Activated T-helper 1 cell treated with anti-CD3 and anti-CD28 coated beads, Interleukin-12 subunit alpha, Interleukin-12 subunit beta, Interleukin-2, Interleukin-4 antibody, amounts not matched to agents 30 ng/mL and 10 ng/mL and 1 ng/mL, durations not matched to agents 14 hours and 24 hours and 36 hours (primary cell): ENCODE measurements at regions of chr16 and their contacts with region 1.

Region 1: GRCh38 chr16:29729116-29729521 is 16.7 kb downstream of the C16orf54 start:
- DNase-seq: no peak
- H3K4me3 Mint-ChIP-seq: no peak overlapping the region
- H3K27ac Mint-ChIP-seq: no peak overlapping the region
- H3K4me1 Mint-ChIP-seq: peaks cover 20% of the 10 kb centered on the region
- H3K27me3 Mint-ChIP-seq: peaks cover 9% of the 10 kb centered on the region

Region 2: DNA sequence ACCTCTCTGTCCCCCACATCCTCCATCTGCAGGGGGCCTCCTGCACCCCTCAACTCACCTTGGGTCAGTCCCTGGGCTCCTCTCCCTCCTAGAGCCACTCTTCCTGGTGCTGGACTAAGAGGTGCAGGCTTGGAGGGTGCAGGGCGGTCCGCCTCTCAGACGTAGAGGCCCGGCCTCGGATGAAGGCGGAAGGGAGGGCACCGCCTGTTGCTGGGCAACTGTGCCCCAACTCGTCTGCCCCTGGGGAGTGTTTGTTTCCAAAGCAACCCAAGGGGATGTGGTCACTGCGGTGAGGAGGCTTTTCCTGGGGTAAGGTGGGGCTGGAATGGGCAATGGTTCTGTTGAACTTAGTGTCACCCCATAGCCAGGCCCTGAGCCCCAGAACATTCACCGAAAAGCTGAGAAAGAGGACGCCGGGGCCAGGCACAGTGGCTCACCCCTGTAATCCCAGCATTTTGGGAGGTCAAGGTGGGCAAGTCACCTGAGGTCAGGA is 16.8 kb after region 1 on chr16 and contains the start of gene C16orf54:
- intact Hi-C with region 1: loop called (anchors 1 kb)
- DNase-seq: peak; percentile 89
- H3K4me3 Mint-ChIP-seq: peak within 1 kb of the TSS; percentile 97
- H3K27ac Mint-ChIP-seq: peak within 1 kb of the TSS; percentile 97
- H3K4me1 Mint-ChIP-seq: peaks cover 49% of the 10 kb centered on the region
- H3K27me3 Mint-ChIP-seq: no peaks in the 10 kb centered on the region
- total RNA-seq, gene C16orf54: 21.3 and 24.6 TPM in 2 replicates

Region 3: DNA sequence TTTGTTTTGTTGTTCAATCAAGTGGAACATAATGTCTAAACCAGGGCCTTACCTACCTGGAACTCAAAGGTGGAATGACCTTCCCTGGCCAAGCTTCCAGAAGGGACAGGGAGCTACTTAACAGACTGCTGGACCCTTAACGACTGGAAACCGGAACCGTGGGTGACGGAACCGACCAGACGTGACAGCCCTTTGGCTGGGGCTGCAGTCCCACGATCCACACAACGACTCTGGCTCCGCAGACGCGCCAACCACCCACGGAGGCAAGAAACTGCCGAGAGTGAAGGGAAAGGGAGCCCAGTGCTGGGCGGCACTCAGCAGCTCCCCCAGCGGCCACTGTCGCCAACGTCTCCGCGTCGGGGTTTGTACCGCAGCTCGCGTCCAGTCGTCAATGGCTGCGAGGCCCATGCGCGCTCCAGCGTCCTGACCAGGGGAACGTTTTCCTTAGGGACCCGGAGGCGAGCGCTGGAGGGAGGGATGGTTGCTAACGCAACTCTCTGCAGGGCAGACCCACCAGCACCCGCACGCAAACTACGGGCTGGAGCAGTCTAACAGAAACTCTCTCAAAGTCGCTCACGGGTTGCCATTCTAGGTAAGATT is 55.9 kb after region 1 on chr16:
- intact Hi-C with region 1: loop called (anchors 1 kb)
- DNase-seq: peak; percentile 69
- H3K4me3 Mint-ChIP-seq: peak overlapping the region; percentile 28
- H3K27ac Mint-ChIP-seq: no peak overlapping the region
- H3K4me1 Mint-ChIP-seq: peaks cover 24% of the 10 kb centered on the region
- H3K27me3 Mint-ChIP-seq: peaks cover 5% of the 10 kb centered on the region

Region 4: GRCh38 chr16:29825145-29826044 is 96.3 kb after region 1 on chr16:
- intact Hi-C with region 1: loop called (anchors 1 kb)
- DNase-seq: peak; percentile 50
- H3K4me3 Mint-ChIP-seq: peak overlapping the region; percentile 68
- H3K27ac Mint-ChIP-seq: peak overlapping the region; percentile 85
- H3K4me1 Mint-ChIP-seq: peaks cover 42% of the 10 kb centered on the region
- H3K27me3 Mint-ChIP-seq: no peaks in the 10 kb centered on the region